ENCODE measurements at regions of chr3 and their contacts with region 1.

Region 1: GRCh38 chr3:111324645-111325044 is 217.4 kb upstream of the CD96 start:
- DNase-seq: peak in 1 of 2 donors; percentile 28
- ATAC-seq: peak; percentile 30 to 49 (median 46)
- H3K4me3 ChIP-seq: no peak overlapping the region
- H3K4me3 Mint-ChIP-seq: peak overlapping the region; percentile 51
- H3K27ac ChIP-seq: peak overlapping the region; percentile 43
- H3K27ac Mint-ChIP-seq: peak overlapping the region; percentile 12 to 71
- H3K4me1 ChIP-seq: peaks cover 6% of the 10 kb centered on the region
- H3K4me1 Mint-ChIP-seq: peaks cover 29 to 35% of the 10 kb centered on the region in 2 donors
- H3K27me3 ChIP-seq: no peaks in the 10 kb centered on the region
- H3K27me3 Mint-ChIP-seq: peaks cover 0 to 4% of the 10 kb centered on the region in 2 donors
- CTCF ChIP-seq: no peak

Region 2: GRCh38 chr3:110384601-110385000 is 940.0 kb before region 1 on chr3:
- intact Hi-C with region 1: no loop called
- DNase-seq: no peak
- ATAC-seq: no peak
- H3K4me3 ChIP-seq: no peak overlapping the region
- H3K4me3 Mint-ChIP-seq: no peak overlapping the region
- H3K27ac ChIP-seq: no peak overlapping the region
- H3K27ac Mint-ChIP-seq: no peak overlapping the region
- H3K4me1 ChIP-seq: no peaks in the 10 kb centered on the region
- H3K4me1 Mint-ChIP-seq: no peaks in the 10 kb centered on the region
- H3K27me3 ChIP-seq: no peaks in the 10 kb centered on the region
- H3K27me3 Mint-ChIP-seq: no peaks in the 10 kb centered on the region
- CTCF ChIP-seq: no peak

Region 3: GRCh38 chr3:111627092-111627491 is 302.4 kb after region 1 on chr3:
- intact Hi-C with region 1: loop called (anchors 5 kb)
- DNase-seq: no peak
- ATAC-seq: no peak
- H3K4me3 ChIP-seq: no peak overlapping the region
- H3K4me3 Mint-ChIP-seq: no peak overlapping the region
- H3K27ac ChIP-seq: no peak overlapping the region
- H3K27ac Mint-ChIP-seq: no peak overlapping the region
- H3K4me1 ChIP-seq: no peaks in the 10 kb centered on the region
- H3K4me1 Mint-ChIP-seq: peaks cover 0 to 6% of the 10 kb centered on the region in 2 donors
- H3K27me3 ChIP-seq: no peaks in the 10 kb centered on the region
- H3K27me3 Mint-ChIP-seq: no peaks in the 10 kb centered on the region
- CTCF ChIP-seq: no peak

Measured in natural killer cell (primary cell).